ENCODE measurements at regions of chr7 and their contacts with region 1.

Region 1: DNA sequence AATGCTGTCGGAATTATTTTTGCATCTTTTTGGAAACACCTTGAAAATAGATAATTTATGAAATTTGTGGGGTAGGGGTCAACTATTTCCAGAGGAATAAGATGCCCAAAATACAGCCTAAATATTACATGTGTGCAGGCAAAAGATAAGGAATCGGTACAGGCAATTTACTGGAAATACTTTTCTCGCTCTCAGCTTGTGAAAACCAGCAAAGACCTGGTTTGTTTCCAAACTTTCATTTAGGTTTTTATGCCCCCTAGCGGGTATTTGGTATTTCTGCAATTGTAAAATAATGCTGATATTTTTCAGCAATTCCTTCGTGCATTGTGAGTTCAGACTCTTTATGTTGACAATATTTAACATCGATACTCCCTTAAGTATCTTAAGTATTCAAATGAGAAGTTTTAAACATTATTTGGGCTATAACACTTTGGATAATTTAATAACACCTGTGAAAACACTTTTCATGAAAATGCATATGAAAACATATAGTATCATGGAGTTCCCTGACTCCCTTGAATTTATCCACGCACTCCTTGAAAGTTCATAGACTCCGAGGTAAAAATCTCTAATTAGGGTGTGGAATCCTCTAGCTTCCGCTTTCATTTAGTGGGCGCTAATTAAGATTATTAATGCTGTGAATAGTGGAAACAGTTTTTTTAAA is 132.4 kb downstream of the TSPAN12 start:
- DNase-seq: peak; percentile 45
- ATAC-seq: no peak
- H3K4me3 ChIP-seq: no peak overlapping the region
- H3K27ac ChIP-seq: no peak overlapping the region
- H3K4me1 ChIP-seq: peaks cover 2% of the 10 kb centered on the region
- H3K27me3 ChIP-seq: peaks cover 4% of the 10 kb centered on the region
- CTCF ChIP-seq: peak; percentile 61
- POLR2A ChIP-seq: no peak
- RAD21 ChIP-seq: peak; percentile 44

Region 2: GRCh38 chr7:119270045-119270464 is 1455.5 kb before region 1 on chr7:
- CTCF ChIA-PET with region 1: no interaction called
- POLR2A ChIA-PET with region 1: no interaction called
- dilution Hi-C with region 1: no loop called
- in situ Hi-C with region 1: no loop called
- intact Hi-C with region 1: loop called (anchors 1 kb)
- DNase-seq: peak; percentile 55
- ATAC-seq: peak; percentile 95
- H3K4me3 ChIP-seq: no peak overlapping the region
- H3K27ac ChIP-seq: no peak overlapping the region
- H3K4me1 ChIP-seq: no peaks in the 10 kb centered on the region
- H3K27me3 ChIP-seq: no peaks in the 10 kb centered on the region
- CTCF ChIP-seq: peak; percentile 78
- POLR2A ChIP-seq: no peak
- RAD21 ChIP-seq: peak; percentile 66

Region 3: GRCh38 chr7:119694506-119694905 is 1031.0 kb before region 1 on chr7:
- CTCF ChIA-PET with region 1: no interaction called
- POLR2A ChIA-PET with region 1: no interaction called
- dilution Hi-C with region 1: no loop called
- in situ Hi-C with region 1: no loop called
- intact Hi-C with region 1: loop called (anchors 10 kb)
- DNase-seq: no peak
- ATAC-seq: no peak
- H3K4me3 ChIP-seq: no peak overlapping the region
- H3K27ac ChIP-seq: no peak overlapping the region
- H3K4me1 ChIP-seq: no peaks in the 10 kb centered on the region
- H3K27me3 ChIP-seq: no peaks in the 10 kb centered on the region
- CTCF ChIP-seq: no peak
- POLR2A ChIP-seq: no peak
- RAD21 ChIP-seq: no peak

Region 4: DNA sequence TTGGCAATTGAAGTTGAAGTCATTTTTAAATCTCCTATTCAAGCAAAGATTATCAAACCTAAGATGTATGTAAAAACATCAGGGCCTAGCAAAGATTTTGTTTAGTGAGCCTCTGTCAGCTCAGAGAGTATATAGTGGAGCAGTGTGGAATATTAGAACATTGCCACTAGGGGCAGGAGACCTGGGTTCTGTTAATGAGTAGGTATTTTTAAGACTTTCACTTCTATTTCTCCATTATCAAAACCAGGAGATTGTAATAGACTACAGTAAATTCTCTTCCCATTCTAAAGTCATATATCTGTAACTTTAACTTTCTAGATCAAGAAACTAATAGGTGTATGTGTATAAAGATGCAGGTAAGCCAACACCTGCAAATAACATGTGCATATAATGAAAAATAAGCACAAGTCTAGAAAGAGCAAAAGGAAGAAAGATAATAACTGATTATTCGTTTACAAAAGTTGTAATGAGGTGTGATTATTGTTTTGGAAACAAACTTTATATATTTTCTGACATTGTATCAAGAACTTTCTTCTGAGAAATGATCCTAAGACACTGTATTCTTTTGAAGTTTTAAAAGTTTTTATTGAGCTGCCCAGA is 388.1 kb before region 1 on chr7:
- CTCF ChIA-PET with region 1: no interaction called
- POLR2A ChIA-PET with region 1: no interaction called
- dilution Hi-C with region 1: no loop called
- in situ Hi-C with region 1: no loop called
- intact Hi-C with region 1: no loop called
- DNase-seq: peak; percentile 0
- ATAC-seq: peak; percentile 65
- H3K4me3 ChIP-seq: no peak overlapping the region
- H3K27ac ChIP-seq: no peak overlapping the region
- H3K4me1 ChIP-seq: no peaks in the 10 kb centered on the region
- H3K27me3 ChIP-seq: no peaks in the 10 kb centered on the region
- CTCF ChIP-seq: peak; percentile 27; the same call in 1 of the 2 replicates
- POLR2A ChIP-seq: no peak
- RAD21 ChIP-seq: no peak

Region 5: DNA sequence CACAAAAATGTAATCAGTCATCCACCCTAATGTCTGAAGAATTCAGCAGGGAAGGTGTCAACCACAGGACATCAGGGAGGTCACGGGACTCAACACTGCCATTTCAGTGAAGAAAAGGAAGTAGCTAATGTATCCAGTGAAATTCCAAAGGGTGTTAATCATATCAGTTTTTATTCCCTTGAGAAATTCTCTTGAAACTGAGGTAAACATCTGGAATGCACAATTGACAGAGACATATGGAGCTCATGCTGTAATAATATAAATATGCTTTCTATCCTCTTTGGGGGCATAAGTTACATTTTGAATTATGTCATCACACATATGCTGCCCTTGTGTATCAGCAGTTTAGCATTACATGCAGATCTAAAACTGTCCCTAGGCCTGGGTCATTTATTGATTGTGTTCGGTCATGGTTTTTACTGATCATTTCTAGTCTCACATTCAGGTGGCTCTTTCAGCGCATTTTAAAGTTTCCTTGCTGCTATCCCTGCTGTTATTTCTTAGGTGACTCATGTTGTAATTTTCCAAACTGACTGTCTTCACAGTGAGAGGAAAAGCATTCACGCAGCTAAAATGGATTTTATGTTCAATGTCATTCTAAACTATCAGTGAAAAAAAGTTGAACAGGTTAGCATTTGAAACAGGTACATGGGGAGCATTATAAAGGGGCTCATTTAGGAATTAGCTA is 141.5 kb before region 1 on chr7:
- CTCF ChIA-PET with region 1: no interaction called
- POLR2A ChIA-PET with region 1: no interaction called
- dilution Hi-C with region 1: no loop called
- in situ Hi-C with region 1: no loop called
- intact Hi-C with region 1: loop called (anchors 5 kb)
- DNase-seq: peak; percentile 59
- ATAC-seq: peak; percentile 83
- H3K4me3 ChIP-seq: no peak overlapping the region
- H3K27ac ChIP-seq: no peak overlapping the region
- H3K4me1 ChIP-seq: no peaks in the 10 kb centered on the region
- H3K27me3 ChIP-seq: no peaks in the 10 kb centered on the region
- CTCF ChIP-seq: no peak
- POLR2A ChIP-seq: no peak
- RAD21 ChIP-seq: no peak

Region 6: DNA sequence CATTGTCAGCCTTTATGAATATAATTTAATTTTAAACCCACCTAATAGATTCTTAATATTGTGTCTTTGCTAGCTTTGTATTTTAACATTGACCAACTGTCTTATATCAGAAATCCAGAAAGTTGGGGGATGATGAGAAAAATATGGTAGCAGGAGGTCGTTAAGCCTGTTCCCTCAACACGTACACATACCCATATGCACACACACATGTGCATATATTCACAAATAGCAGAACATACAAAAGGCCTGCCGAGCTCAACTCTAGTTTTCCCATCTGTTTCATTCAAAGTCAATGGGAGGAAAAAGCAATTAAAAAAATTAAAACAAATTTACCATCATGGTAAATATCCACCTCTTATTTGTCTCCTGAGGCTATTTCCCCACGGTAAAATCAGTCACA is 1121.5 kb after region 1 on chr7:
- CTCF ChIA-PET with region 1: no interaction called
- POLR2A ChIA-PET with region 1: no interaction called
- dilution Hi-C with region 1: no loop called
- in situ Hi-C with region 1: no loop called
- intact Hi-C with region 1: no loop called
- DNase-seq: no peak
- ATAC-seq: no peak
- H3K4me3 ChIP-seq: no peak overlapping the region
- H3K27ac ChIP-seq: no peak overlapping the region
- H3K4me1 ChIP-seq: no peaks in the 10 kb centered on the region
- H3K27me3 ChIP-seq: no peaks in the 10 kb centered on the region
- CTCF ChIP-seq: no peak
- POLR2A ChIP-seq: no peak
- RAD21 ChIP-seq: no peak

Region 7: GRCh38 chr7:122515404-122515803 is 1789.9 kb after region 1 on chr7:
- CTCF ChIA-PET with region 1: no interaction called
- POLR2A ChIA-PET with region 1: no interaction called
- dilution Hi-C with region 1: no loop called
- in situ Hi-C with region 1: no loop called
- intact Hi-C with region 1: loop called (anchors 5 kb)
- DNase-seq: no peak
- ATAC-seq: no peak
- H3K4me3 ChIP-seq: no peak overlapping the region
- H3K27ac ChIP-seq: no peak overlapping the region
- H3K4me1 ChIP-seq: no peaks in the 10 kb centered on the region
- H3K27me3 ChIP-seq: no peaks in the 10 kb centered on the region
- CTCF ChIP-seq: no peak
- POLR2A ChIP-seq: no peak
- RAD21 ChIP-seq: no peak

Measured in IMR-90 (cell line).